ENCODE measurements at regions of chr14 and their contacts with region 1.

Region 1: GRCh38 chr14:62162998-62163589 is 400.9 kb downstream of the SNAPC1 start:
- DNase-seq: peak; percentile 23
- H3K4me3 Mint-ChIP-seq: no peak overlapping the region
- H3K27ac Mint-ChIP-seq: no peak overlapping the region
- H3K4me1 Mint-ChIP-seq: no peaks in the 10 kb centered on the region
- H3K27me3 Mint-ChIP-seq: peaks cover 52% of the 10 kb centered on the region
- CTCF ChIP-seq: peak; percentile 66

Region 2: DNA sequence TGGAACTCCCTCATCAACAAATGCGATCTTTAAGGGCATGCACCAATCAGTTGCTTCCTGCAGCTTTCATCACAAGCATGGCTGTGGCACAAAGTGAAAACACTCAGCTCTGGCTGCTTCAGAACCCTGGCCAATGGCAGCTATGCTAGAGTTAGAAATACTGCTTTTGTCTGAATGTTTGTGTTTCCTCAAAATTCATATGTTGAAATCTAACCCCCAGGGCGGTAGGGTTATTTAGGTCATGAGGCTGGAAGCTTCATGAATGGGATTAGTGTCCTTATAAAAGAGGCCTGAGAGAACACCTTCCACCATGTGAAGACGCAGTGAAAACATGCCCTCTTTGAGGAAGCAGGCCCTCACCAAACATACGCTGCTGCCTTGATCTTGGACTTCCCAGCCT is 53.0 kb after region 1 on chr14:
- CTCF ChIA-PET with region 1: no interaction called
- intact Hi-C with region 1: no loop called
- DNase-seq: no peak
- H3K4me3 Mint-ChIP-seq: no peak overlapping the region
- H3K27ac Mint-ChIP-seq: no peak overlapping the region
- H3K4me1 Mint-ChIP-seq: no peaks in the 10 kb centered on the region
- H3K27me3 Mint-ChIP-seq: peaks cover 20% of the 10 kb centered on the region
- CTCF ChIP-seq: no peak

Region 3: DNA sequence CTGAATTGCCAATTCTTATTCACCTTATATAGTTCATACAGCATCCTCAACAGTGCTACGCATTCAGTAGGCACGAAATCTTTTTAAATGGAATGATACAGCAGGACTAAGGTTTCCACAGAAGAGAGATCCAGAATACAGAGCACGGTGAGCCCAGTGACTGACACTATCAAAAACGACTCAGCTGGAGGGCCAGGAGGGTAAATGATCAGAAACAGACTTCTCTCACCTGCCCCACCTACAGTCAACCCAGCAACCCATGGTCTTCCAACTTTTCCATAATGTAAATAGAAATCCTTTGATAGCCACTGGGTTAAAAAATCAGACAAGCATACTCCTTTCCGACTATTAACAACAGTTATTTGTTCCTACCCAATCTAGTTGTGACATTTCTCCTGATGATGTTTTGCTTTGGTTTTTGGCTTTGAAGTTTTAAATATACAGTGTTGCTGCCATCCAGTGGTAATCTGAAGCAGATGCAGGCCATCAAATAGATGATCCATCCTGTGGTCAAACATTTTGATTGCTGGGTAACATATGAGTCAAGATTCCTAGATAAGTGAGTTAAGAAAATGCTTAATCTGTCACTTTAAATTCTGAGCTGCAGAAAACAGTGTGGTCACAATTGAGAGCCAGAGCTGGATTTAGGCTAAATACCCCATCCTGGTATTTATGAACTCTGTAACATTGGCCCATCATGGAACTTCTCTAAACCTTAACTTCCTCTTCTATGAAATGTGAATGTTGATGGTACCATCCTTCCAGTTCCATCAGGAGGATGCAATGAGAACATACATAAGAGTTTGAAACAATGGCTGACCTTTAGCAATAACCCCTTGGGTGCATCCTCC is 1113.6 kb after region 1 on chr14:
- CTCF ChIA-PET with region 1: no interaction called
- intact Hi-C with region 1: loop called (anchors 1 kb)
- DNase-seq: peak; percentile 12
- H3K4me3 Mint-ChIP-seq: no peak overlapping the region
- H3K27ac Mint-ChIP-seq: no peak overlapping the region
- H3K4me1 Mint-ChIP-seq: no peaks in the 10 kb centered on the region
- H3K27me3 Mint-ChIP-seq: no peaks in the 10 kb centered on the region
- CTCF ChIP-seq: peak; percentile 49

Region 4: GRCh38 chr14:63308723-63309317 is 1145.7 kb after region 1 on chr14:
- CTCF ChIA-PET with region 1: no interaction called
- intact Hi-C with region 1: loop called (anchors 1 kb)
- DNase-seq: peak; percentile 66
- H3K4me3 Mint-ChIP-seq: no peak overlapping the region
- H3K27ac Mint-ChIP-seq: no peak overlapping the region
- H3K4me1 Mint-ChIP-seq: no peaks in the 10 kb centered on the region
- H3K27me3 Mint-ChIP-seq: peaks cover 41% of the 10 kb centered on the region
- CTCF ChIP-seq: peak; percentile 69